Activated T-helper 2 cell treated with anti-CD3 and anti-CD28 coated beads, Interferon-gamma antibody, Interleukin-2, Interleukin-4, amounts not matched to agents 10 μg/mL and 5 μg/mL and 100 μg/mL, durations not matched to agents 14 hours and 24 hours and 36 hours (primary cell): ENCODE measurements at regions of chr19 and their contacts with region 1.

Region 1: DNA sequence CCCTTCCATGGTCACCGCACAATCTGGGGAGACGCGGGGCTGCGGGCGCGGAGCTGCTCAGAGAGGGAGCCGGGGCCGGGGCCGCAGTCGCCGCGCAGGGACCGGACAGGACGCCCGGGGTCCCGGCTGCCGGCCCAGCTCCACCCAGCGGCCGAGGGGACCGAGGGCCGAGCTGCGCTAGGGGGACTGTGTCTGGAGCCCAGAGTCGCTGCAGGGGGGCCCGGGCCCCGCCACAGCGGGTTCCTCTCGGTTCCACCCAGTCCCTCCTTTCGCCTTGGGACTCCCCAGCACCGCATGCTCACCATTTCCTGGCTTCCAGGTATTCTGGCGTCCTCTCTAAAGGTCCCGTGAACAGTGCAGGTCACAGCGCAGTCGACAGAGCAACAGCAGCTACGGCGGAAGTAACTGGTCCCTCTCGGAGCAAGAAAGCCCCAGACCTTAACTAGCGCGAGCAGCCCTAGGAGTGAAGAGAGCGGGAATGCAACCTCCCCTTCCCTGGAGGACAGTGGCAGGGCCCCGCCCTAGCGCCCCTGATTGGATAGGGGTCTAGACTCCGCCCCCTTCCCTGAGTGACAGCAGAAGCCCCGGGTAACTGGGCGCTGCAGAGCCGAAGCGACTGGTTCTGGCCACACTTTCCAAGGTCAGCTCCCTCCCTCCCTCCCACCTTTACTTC is at the start of gene ZNF878:
- DNase-seq: peak; percentile 42
- H3K4me3 Mint-ChIP-seq: peak within 1 kb of the TSS; percentile 83
- H3K27ac Mint-ChIP-seq: peak within 1 kb of the TSS; percentile 46
- H3K4me1 Mint-ChIP-seq: peaks cover 9% of the 10 kb centered on the region
- H3K27me3 Mint-ChIP-seq: peaks cover 7% of the 10 kb centered on the region
- total RNA-seq, gene ZNF878: 0.98 and 1.3 TPM in 2 replicates

Region 2: GRCh38 chr19:11924886-11925650 is 127.6 kb before region 1 on chr19 and contains the start of gene ZNF700:
- intact Hi-C with region 1: no loop called
- DNase-seq: peak; percentile 91
- H3K4me3 Mint-ChIP-seq: peak within 1 kb of the TSS; percentile 95
- H3K27ac Mint-ChIP-seq: peak within 1 kb of the TSS; percentile 98
- H3K4me1 Mint-ChIP-seq: peaks cover 23% of the 10 kb centered on the region
- H3K27me3 Mint-ChIP-seq: peaks cover 2% of the 10 kb centered on the region
- total RNA-seq, gene ZNF700: 14.5 and 14.6 TPM in 2 replicates

Region 3: GRCh38 chr19:11964858-11965645 is 87.6 kb before region 1 on chr19 and contains the start of gene ZNF763:
- intact Hi-C with region 1: loop called (anchors 10 kb)
- DNase-seq: peak; percentile 80
- H3K4me3 Mint-ChIP-seq: peak within 1 kb of the TSS; percentile 83
- H3K27ac Mint-ChIP-seq: peak within 1 kb of the TSS; percentile 82
- H3K4me1 Mint-ChIP-seq: peaks cover 17% of the 10 kb centered on the region
- H3K27me3 Mint-ChIP-seq: no peaks in the 10 kb centered on the region
- total RNA-seq, gene ZNF763: 0.43 and 0.74 TPM in 2 replicates

Region 4: GRCh38 chr19:12669270-12670158 is 616.9 kb after region 1 on chr19:
- intact Hi-C with region 1: no loop called
- DNase-seq: peak; percentile 71
- H3K4me3 Mint-ChIP-seq: peak overlapping the region; percentile 93
- H3K27ac Mint-ChIP-seq: peak overlapping the region; percentile 100
- H3K4me1 Mint-ChIP-seq: peaks cover 38% of the 10 kb centered on the region
- H3K27me3 Mint-ChIP-seq: no peaks in the 10 kb centered on the region